AG04449 (cell line): ENCODE measurements at regions of chr15 and their contacts with region 1.

Region 1: DNA sequence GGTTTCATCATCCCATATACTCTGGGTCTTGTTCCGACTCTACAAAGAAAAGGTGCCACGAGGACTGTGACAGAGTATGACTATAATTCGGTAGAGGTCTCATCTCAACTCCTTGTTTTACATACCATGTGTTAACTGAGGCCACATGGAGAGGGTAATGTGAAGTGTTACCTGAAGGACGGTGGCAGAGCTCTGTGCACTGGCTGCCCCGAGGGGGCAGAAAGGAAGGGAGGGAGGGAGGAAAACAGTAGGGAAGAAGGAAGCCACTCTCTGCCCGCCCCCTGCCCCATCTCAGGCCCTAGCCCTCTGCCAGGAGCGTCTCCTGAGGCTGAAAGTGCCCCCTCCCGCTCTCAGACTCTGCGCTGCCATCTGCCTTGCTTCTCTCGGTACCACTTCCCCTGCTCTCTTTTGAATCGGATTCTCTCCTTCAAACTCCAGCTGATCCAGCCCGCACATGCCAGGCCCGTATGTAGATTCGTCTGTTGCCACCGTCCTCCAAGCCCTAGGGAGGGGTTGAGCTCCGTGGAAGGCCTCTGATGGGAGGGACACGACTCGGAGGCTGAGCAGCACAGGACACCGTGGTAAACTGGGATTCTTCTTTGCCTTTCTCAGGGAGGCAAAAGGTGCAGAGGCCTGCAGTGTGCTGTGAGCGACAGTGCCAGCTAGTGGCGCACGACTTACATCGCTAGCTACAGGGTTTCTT is 70.5 kb upstream of the ATP10A start:
- DNase-seq: peak; percentile 57
- H3K4me3 ChIP-seq: peak overlapping the region; percentile 42
- CTCF ChIP-seq: peak; percentile 84

Region 2: GRCh38 chr15:25741256-25741580 is 192.4 kb before region 1 on chr15:
- CTCF ChIA-PET with region 1: interaction called, 11 read pairs
- POLR2A ChIA-PET with region 1: no interaction called
- DNase-seq: no peak
- H3K4me3 ChIP-seq: no peak overlapping the region
- CTCF ChIP-seq: no peak

Region 3: DNA sequence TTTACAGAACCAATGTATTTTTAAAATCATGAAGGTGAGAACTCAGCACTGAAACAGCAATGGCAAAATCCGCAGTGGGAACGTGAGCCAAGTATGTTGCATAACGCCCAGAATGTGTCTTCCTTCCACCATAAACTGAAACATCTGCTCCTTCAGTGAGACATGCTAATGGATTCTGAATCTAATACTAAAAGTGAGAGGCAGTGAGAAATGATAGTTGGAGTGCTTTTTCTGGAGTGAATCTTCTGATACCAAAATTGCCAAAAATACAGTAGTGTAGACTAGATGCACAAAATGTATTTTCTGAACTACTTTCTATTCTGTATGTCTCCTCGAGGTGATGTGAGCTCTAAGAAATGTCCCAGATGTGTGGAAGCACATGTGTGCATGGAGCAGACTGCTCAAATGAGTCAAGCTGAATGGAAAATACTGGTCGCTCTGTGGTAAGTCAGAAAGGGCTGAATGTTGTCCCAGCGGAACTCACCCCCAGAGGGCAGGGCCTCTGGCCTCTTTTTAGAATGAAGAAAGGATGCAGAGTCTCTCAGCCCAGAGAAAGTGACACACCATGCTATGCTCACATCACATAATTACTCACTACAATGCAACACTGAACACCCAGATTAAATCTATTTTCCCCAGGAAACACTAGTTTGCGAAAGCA is 143.5 kb before region 1 on chr15:
- CTCF ChIA-PET with region 1: interaction called, 41 read pairs
- POLR2A ChIA-PET with region 1: interaction called, 4 read pairs
- DNase-seq: peak; percentile 73
- H3K4me3 ChIP-seq: peak overlapping the region; percentile 13
- CTCF ChIP-seq: no peak

Region 4: DNA sequence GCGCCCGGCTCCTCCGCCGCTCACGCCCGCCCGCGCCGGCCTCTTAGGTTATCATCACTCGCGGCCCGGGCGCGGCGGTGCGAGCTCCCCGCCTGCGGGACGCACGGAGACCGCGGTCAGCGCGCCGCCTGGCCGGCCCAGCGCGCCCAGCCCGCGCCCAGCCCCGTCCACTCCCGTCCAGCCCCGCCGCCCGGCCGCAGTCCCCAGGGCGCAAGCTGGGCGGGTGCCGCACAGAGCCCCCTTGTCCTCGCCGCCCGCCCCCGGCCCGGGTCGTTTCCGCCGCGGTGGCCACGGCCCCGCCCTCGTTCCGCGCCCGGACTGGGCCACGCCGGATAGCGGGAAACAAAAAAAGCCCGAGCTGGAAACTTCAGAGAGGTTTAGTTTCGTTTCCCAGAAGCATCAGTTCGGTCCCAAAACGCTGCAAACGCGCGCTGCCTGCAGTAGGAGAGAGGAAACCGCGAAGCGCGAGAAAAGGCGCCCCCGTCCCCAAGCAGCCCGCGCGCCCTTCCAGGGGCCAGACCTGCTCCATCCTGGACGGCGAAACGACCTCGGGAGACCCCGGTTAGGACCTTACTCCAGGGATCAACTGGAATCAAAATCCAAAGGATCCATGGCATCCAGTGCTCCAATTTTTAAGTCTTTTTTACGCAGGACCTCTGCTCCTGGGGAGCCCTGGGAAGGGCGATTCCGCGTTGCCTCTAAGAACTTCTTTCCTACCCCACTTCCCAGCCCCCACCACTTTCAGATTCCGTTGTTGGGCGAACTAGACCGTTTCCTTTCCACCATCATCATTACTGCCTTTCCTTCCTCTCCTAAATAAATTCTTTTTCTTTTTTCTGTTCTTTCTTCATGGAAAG is 70.3 kb before region 1 on chr15 and contains the start of gene ATP10A:
- CTCF ChIA-PET with region 1: interaction called, 10 read pairs
- POLR2A ChIA-PET with region 1: interaction called, 4 read pairs
- DNase-seq: no peak
- H3K4me3 ChIP-seq: peak within 1 kb of the TSS; percentile 81
- CTCF ChIP-seq: no peak

Region 5: GRCh38 chr15:25947323-25948314 is 14.0 kb after region 1 on chr15:
- CTCF ChIA-PET with region 1: interaction called, 25 read pairs
- POLR2A ChIA-PET with region 1: no interaction called
- DNase-seq: no peak
- H3K4me3 ChIP-seq: no peak overlapping the region
- CTCF ChIP-seq: peak; percentile 17